ENCODE measurements at regions of chrX and their contacts with region 1.

Region 1: GRCh38 chrX:100768679-100769338 is 36.9 kb upstream of the SYTL4 start:
- DNase-seq: peak; percentile 0
- H3K4me3 ChIP-seq: no peak overlapping the region
- CTCF ChIP-seq: peak; percentile 78

Region 2: DNA sequence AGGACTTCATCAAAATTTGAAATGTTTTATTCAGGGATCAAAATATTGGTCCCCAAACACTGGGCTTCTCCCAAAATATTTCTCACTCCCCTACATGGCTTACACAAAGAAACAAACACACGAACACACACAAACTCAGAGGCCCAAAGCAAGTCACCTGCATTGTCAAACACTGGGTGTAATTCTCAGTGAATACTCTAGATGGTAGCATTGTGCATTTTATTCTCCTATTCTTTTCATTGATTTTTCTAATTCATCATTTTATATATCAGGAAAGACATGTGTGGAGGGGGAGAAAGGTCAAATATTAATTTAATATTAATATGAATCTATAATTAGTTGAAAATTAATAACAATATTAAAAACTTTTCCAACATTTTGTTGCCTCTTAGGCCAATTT is 256.3 kb before region 1 on chrX:
- CTCF ChIA-PET with region 1: interaction called, 15 read pairs
- POLR2A ChIA-PET with region 1: no interaction called
- DNase-seq: no peak
- H3K4me3 ChIP-seq: no peak overlapping the region
- CTCF ChIP-seq: peak; percentile 31

Region 3: DNA sequence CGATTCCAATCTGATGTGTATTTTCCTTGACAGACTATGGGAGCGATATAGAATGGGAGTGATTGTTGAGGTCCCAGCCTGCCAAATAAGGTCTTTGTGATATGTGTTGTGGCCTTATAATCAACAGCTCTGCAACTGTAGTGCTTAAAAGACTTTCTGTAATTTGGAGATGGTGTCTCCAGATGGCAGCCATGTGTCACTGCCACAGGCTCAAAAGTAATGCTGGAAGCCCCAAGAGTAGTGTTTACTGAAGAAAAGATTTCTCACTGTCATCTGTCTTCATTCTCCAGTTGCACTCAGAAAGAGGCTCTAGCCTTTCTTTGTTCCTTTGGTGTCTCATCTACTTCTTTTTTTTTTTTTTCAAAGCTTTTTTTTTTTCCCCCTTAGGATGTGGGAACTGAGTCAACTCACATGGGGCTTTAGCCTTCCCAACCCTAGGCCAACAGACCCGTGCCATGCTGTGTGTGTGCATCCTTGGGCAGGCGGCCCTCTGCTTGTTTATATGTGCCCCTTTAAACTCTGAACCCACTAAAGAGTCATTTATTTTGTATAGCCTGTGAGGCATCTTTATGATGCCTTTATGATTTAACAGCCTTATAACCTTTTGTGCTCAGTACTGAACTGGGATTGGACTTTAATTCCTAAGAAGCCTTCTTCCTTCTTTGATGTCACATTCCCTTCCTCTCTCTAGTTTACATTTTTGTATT is 109.2 kb before region 1 on chrX:
- CTCF ChIA-PET with region 1: interaction called, 15 read pairs
- POLR2A ChIA-PET with region 1: no interaction called
- DNase-seq: no peak
- H3K4me3 ChIP-seq: no peak overlapping the region
- CTCF ChIP-seq: no peak

Region 4: GRCh38 chrX:100685284-100685996 is 83.4 kb before region 1 on chrX:
- CTCF ChIA-PET with region 1: interaction called, 210 read pairs
- POLR2A ChIA-PET with region 1: no interaction called
- DNase-seq: peak; percentile 19
- H3K4me3 ChIP-seq: no peak overlapping the region
- CTCF ChIP-seq: peak; percentile 57

Region 5: GRCh38 chrX:100700809-100701208 is 68.0 kb before region 1 on chrX:
- CTCF ChIA-PET with region 1: interaction called, 11 read pairs
- POLR2A ChIA-PET with region 1: no interaction called
- DNase-seq: no peak
- H3K4me3 ChIP-seq: no peak overlapping the region
- CTCF ChIP-seq: no peak

Region 6: GRCh38 chrX:100731441-100732281 is 37.1 kb before region 1 on chrX and contains the start of gene SYTL4:
- CTCF ChIA-PET with region 1: interaction called, 24 read pairs
- POLR2A ChIA-PET with region 1: no interaction called
- DNase-seq: no peak
- H3K4me3 ChIP-seq: peak within 1 kb of the TSS; percentile 70
- CTCF ChIP-seq: no peak

Region 7: GRCh38 chrX:101040197-101040596 is 271.4 kb after region 1 on chrX:
- CTCF ChIA-PET with region 1: no interaction called
- POLR2A ChIA-PET with region 1: no interaction called
- DNase-seq: no peak
- H3K4me3 ChIP-seq: no peak overlapping the region
- CTCF ChIP-seq: no peak

Region 8: GRCh38 chrX:101265869-101266428 is 497.1 kb after region 1 on chrX:
- CTCF ChIA-PET with region 1: no interaction called
- POLR2A ChIA-PET with region 1: no interaction called
- DNase-seq: peak; percentile 23
- H3K4me3 ChIP-seq: no peak overlapping the region
- CTCF ChIP-seq: no peak

Measured in AG04449 (cell line).